ENCODE measurements at regions of chr17 and their contacts with region 1.

Region 1: GRCh38 chr17:71412803-71413202 is 708.0 kb upstream of the SOX9 start:
- DNase-seq: peak; percentile 99
- ATAC-seq: peak; percentile 96
- H3K4me3 ChIP-seq: no peak overlapping the region
- H3K27ac ChIP-seq: no peak overlapping the region
- H3K4me1 ChIP-seq: peaks cover 16% of the 10 kb centered on the region
- H3K27me3 ChIP-seq: no peaks in the 10 kb centered on the region
- CTCF ChIP-seq: no peak
- POLR2A ChIP-seq: no peak
- RAD21 ChIP-seq: no peak

Region 2: GRCh38 chr17:71338396-71338795 is 74.4 kb before region 1 on chr17:
- CTCF ChIA-PET with region 1: no interaction called
- POLR2A ChIA-PET with region 1: no interaction called
- dilution Hi-C with region 1: no loop called
- in situ Hi-C with region 1: no loop called
- intact Hi-C with region 1: no loop called
- DNase-seq: peak; percentile 43
- ATAC-seq: no peak; the same call in 1 of the 2 replicates
- H3K4me3 ChIP-seq: peak overlapping the region; percentile 46; the same call in 1 of the 2 replicates
- H3K27ac ChIP-seq: no peak overlapping the region
- H3K4me1 ChIP-seq: no peaks in the 10 kb centered on the region; the same call in 1 of the 2 replicates
- H3K27me3 ChIP-seq: no peaks in the 10 kb centered on the region
- CTCF ChIP-seq: no peak
- POLR2A ChIP-seq: no peak
- RAD21 ChIP-seq: no peak

Region 3: DNA sequence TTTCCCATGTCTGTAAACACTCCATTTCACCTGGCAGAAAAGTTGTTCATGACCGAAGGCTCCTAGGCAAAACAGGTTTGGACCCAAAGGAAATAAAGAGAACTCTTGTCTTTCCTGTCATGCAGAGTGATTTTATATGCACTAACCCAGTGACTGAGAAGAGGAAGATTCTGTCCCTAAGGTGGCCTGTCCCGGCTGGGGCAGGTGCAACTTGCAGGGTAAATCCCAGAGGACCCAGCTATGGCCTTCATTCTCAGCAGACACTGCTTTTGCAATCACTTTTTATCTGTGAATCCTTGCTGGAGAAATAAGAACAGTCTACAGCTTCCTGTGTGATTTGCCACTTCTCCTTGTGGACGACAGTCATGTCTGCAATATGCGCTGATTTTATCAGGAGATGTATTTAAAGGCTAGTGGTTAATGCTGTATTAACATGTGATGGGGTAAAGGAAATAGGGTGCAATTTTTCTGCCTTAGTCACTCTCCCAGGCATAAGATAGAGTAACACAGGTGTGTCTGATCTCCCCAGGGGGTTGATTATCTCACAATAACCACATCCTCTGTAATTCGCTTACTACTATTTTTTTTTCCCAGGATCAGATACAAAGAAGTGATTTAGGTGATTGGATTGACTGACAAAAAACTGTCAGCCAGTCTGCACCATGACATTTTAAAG is 11.2 kb after region 1 on chr17:
- CTCF ChIA-PET with region 1: interaction called, 4 read pairs
- POLR2A ChIA-PET with region 1: no interaction called
- dilution Hi-C with region 1: no loop called
- in situ Hi-C with region 1: no loop called
- intact Hi-C with region 1: loop called (anchors 1 kb)
- DNase-seq: peak; percentile 76
- ATAC-seq: no peak
- H3K4me3 ChIP-seq: no peak overlapping the region
- H3K27ac ChIP-seq: no peak overlapping the region
- H3K4me1 ChIP-seq: peaks cover 2% of the 10 kb centered on the region; the same call in 1 of the 2 replicates
- H3K27me3 ChIP-seq: no peaks in the 10 kb centered on the region
- CTCF ChIP-seq: no peak
- POLR2A ChIP-seq: no peak
- RAD21 ChIP-seq: no peak

Region 4: DNA sequence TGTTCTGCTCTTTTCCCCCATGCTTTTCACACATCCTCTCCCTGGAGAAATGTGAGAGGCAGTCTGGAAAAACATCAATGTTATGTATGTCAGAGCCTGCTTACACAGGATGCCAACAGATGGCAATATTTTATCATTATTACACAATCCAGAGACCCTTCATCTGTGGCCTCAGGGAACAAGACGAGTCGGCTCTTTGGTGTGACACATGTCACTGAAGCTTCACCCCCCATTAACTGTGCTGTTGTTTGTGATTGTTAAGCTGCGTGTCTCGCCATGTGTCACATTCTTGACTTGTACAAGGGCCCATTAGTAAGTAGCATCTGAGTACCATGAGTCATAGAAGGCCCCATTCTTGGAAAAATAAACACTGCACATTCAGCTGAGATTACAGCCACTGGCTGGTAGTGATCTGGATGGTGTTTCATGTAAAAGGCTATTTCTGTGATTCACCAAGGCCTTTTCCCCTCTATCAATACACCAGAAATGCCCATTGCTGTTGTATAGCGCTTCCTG is 25.9 kb after region 1 on chr17:
- CTCF ChIA-PET with region 1: no interaction called
- POLR2A ChIA-PET with region 1: interaction called, 5 read pairs
- dilution Hi-C with region 1: no loop called
- in situ Hi-C with region 1: no loop called
- intact Hi-C with region 1: loop called (anchors 1 kb)
- DNase-seq: peak; percentile 98
- ATAC-seq: peak; percentile 85
- H3K4me3 ChIP-seq: no peak overlapping the region
- H3K27ac ChIP-seq: peak overlapping the region; percentile 75
- H3K4me1 ChIP-seq: peaks cover 9% of the 10 kb centered on the region
- H3K27me3 ChIP-seq: no peaks in the 10 kb centered on the region
- CTCF ChIP-seq: peak; percentile 18; the same call in 1 of the 2 replicates
- POLR2A ChIP-seq: no peak
- RAD21 ChIP-seq: peak; percentile 41

Region 5: DNA sequence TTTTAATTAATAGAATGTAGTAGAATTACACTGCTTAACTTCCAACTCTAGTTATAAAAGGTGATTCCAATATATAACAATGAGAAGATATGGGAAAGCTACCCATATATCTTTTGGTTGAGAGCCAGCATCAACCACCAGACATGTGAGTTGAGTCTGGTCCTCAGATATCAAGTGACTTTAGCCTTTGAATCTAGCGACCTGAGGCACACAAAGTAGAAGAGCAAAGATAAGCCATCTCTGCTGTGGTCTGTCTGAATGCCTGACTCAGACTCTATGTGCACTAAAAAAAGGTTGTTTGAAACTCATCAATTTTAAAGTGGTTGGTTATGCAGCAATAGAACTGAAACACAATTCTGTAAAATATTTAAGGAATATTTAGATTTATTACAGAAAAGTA is 215.5 kb after region 1 on chr17:
- CTCF ChIA-PET with region 1: no interaction called
- POLR2A ChIA-PET with region 1: interaction called, 14 read pairs
- dilution Hi-C with region 1: no loop called
- in situ Hi-C with region 1: no loop called
- intact Hi-C with region 1: no loop called
- DNase-seq: no peak
- ATAC-seq: no peak
- H3K4me3 ChIP-seq: no peak overlapping the region
- H3K27ac ChIP-seq: no peak overlapping the region
- H3K4me1 ChIP-seq: peaks cover 8% of the 10 kb centered on the region
- H3K27me3 ChIP-seq: no peaks in the 10 kb centered on the region
- CTCF ChIP-seq: no peak
- POLR2A ChIP-seq: no peak
- RAD21 ChIP-seq: no peak